Activated CD8-positive, alpha-beta T cell treated with anti-CD3 and anti-CD28 coated beads, Interleukin-2, amount 10 ng/mL, durations not matched to agents 7 days and 5 days (primary cell): ENCODE measurements at regions of chr10 and their contacts with region 1.

Region 1: GRCh38 chr10:103103989-103104388 is 89.1 kb downstream of the NT5C2 start:
- DNase-seq: no peak
- ATAC-seq: no peak
- H3K4me3 Mint-ChIP-seq: no peak overlapping the region
- H3K27ac Mint-ChIP-seq: no peak overlapping the region
- H3K4me1 Mint-ChIP-seq: no peaks in the 10 kb centered on the region
- H3K27me3 Mint-ChIP-seq: no peaks in the 10 kb centered on the region

Region 2: DNA sequence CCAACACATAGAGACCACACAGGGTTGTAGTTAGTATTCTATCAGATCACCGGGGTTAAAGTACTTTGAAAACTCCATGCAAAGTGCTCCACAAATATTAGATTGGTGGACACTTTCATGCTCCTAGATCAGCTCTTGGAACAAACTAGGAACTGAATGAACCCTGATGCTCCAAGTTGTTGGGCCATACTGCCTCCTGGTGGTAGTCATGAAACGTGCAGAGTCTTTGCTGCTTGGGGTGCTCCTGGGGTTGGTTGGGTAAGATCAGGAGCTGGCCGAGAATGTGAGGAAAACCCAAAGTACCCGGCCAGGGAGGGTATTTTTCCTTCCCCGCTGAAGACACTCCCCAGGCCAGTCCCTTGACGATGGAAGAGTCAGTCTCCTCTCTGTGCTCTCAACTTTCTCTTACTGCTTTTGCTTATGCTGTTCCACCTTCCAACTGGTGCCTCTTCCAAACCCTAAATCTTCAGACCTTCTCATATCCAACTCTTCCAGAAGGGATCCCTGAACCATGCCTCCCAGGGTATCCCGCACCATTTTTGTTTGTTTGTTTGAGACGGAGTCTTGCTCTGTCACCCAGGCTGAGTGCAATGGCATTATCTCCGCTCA is 140.8 kb after region 1 on chr10:
- CTCF ChIA-PET with region 1: interaction called, 10 read pairs
- POLR2A ChIA-PET with region 1: no interaction called
- DNase-seq: peak; percentile 73
- ATAC-seq: peak; percentile 80
- H3K4me3 Mint-ChIP-seq: no peak overlapping the region
- H3K27ac Mint-ChIP-seq: no peak overlapping the region
- H3K4me1 Mint-ChIP-seq: peaks cover 19% of the 10 kb centered on the region
- H3K27me3 Mint-ChIP-seq: peaks cover 6% of the 10 kb centered on the region